Stomach (tissue), 19 donors: ENCODE measurements at regions of chr2 and their contacts with region 1.

Region 1: GRCh38 chr2:11863513-11864328 is 117.3 kb downstream of the LPIN1 start:
- DNase-seq: peak; percentile 80 to 91
- H3K4me3 ChIP-seq: peak overlapping the region in 3 of 4 donors; percentile 12 to 25 (median 14)
- H3K27ac ChIP-seq: peak overlapping the region in 3 of 5 donors; percentile 25 to 53 (median 35)
- H3K4me1 ChIP-seq: peaks cover 0 to 15% (median 8%) of the 10 kb centered on the region in 4 donors
- H3K27me3 ChIP-seq: no peaks in the 10 kb centered on the region
- CTCF ChIP-seq: peak in 6 of 7 experiments; percentile 25 to 97 (median 96)
- EP300 ChIP-seq: no peak
- POLR2A ChIP-seq: no peak

Region 2: GRCh38 chr2:13006829-13007717 is 1143.4 kb after region 1 on chr2:
- intact Hi-C with region 1: loop called (anchors 5 kb)
- DNase-seq: peak; percentile 68 to 90
- H3K4me3 ChIP-seq: no peak overlapping the region
- H3K27ac ChIP-seq: no peak overlapping the region
- H3K4me1 ChIP-seq: peaks cover 0 to 27% (median 11%) of the 10 kb centered on the region in 4 donors
- H3K27me3 ChIP-seq: no peaks in the 10 kb centered on the region
- CTCF ChIP-seq: peak in 5 of 7 experiments; percentile 82 to 89 (median 85)
- EP300 ChIP-seq: no peak
- POLR2A ChIP-seq: no peak